CD8-positive, alpha-beta T cell (primary cell): ENCODE measurements at regions of chr11 and their contacts with region 1.

Region 1: GRCh38 chr11:65083834-65084597 is at the starts of genes CDCA5 and ZFPL1:
- DNase-seq: peak; percentile 94 to 98 (median 96)
- ATAC-seq: peak; percentile 88
- H3K4me3 ChIP-seq: peak within 1 kb of the TSS; percentile 71 to 87
- H3K4me3 Mint-ChIP-seq: peak within 1 kb of the TSS; percentile 93
- H3K27ac ChIP-seq: peak within 1 kb of the TSS; percentile 90 to 97
- H3K27ac Mint-ChIP-seq: peak within 1 kb of the TSS; percentile 99
- H3K4me1 ChIP-seq: peaks cover 17% of the 10 kb centered on the region
- H3K4me1 Mint-ChIP-seq: peaks cover 27% of the 10 kb centered on the region
- H3K27me3 ChIP-seq: no peaks in the 10 kb centered on the region
- H3K27me3 Mint-ChIP-seq: no peaks in the 10 kb centered on the region
- CTCF ChIP-seq: no peak
- total RNA-seq, gene CDCA5: 0.76 to 1.2 TPM
- total RNA-seq, gene ZFPL1: 52.3 to 52.6 TPM

Region 2: DNA sequence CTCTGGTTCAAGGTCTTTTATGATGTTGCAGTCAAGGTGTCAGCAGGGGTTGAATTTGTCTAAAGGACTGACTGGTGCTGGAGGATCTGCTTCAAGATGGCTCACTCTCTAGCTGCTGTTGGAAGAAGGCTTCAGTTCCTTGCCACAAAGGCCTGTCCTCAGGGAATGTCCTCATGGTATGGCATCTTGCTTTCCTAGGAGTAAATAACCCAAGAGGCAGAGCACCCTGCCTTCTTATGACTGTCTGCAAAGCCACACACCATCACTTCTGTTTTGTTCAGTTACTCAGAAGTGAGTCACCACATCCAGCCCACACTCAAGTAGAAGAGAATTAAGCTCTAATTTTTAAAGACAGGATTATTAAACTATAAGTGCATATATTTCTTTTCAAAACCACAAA is 1638.3 kb before region 1 on chr11:
- CTCF ChIA-PET with region 1: no interaction called
- POLR2A ChIA-PET with region 1: no interaction called
- intact Hi-C with region 1: no loop called
- DNase-seq: no peak
- ATAC-seq: no peak
- H3K4me3 ChIP-seq: no peak overlapping the region
- H3K4me3 Mint-ChIP-seq: no peak overlapping the region
- H3K27ac ChIP-seq: no peak overlapping the region
- H3K27ac Mint-ChIP-seq: no peak overlapping the region
- H3K4me1 ChIP-seq: no peaks in the 10 kb centered on the region
- H3K4me1 Mint-ChIP-seq: peaks cover 13% of the 10 kb centered on the region
- H3K27me3 ChIP-seq: no peaks in the 10 kb centered on the region
- H3K27me3 Mint-ChIP-seq: no peaks in the 10 kb centered on the region
- CTCF ChIP-seq: no peak

Region 3: GRCh38 chr11:65040847-65041621 is 43.0 kb before region 1 on chr11 and contains the start of gene SAC3D1:
- CTCF ChIA-PET with region 1: interaction called, 4 read pairs
- POLR2A ChIA-PET with region 1: no interaction called
- intact Hi-C with region 1: loop called (anchors 1 kb)
- DNase-seq: peak; percentile 67 to 94 (median 85)
- ATAC-seq: peak; percentile 90
- H3K4me3 ChIP-seq: peak within 1 kb of the TSS; percentile 63 to 76
- H3K4me3 Mint-ChIP-seq: peak within 1 kb of the TSS; percentile 93
- H3K27ac ChIP-seq: peak within 1 kb of the TSS; percentile 34 to 82
- H3K27ac Mint-ChIP-seq: peak within 1 kb of the TSS; percentile 91
- H3K4me1 ChIP-seq: peaks cover 17% of the 10 kb centered on the region
- H3K4me1 Mint-ChIP-seq: peaks cover 15% of the 10 kb centered on the region
- H3K27me3 ChIP-seq: no peaks in the 10 kb centered on the region
- H3K27me3 Mint-ChIP-seq: no peaks in the 10 kb centered on the region
- CTCF ChIP-seq: no peak
- total RNA-seq, gene SAC3D1: 0.57 to 0.94 TPM

Region 4: GRCh38 chr11:65095974-65096806 is 12.2 kb after region 1 on chr11 and contains the start of gene VPS51:
- CTCF ChIA-PET with region 1: interaction called, 5 read pairs
- POLR2A ChIA-PET with region 1: interaction called, 10 read pairs
- intact Hi-C with region 1: loop called (anchors 1 kb)
- DNase-seq: peak; percentile 70 to 95 (median 85)
- ATAC-seq: peak; percentile 84
- H3K4me3 ChIP-seq: peak within 1 kb of the TSS; percentile 80 to 81
- H3K4me3 Mint-ChIP-seq: peak within 1 kb of the TSS; percentile 95
- H3K27ac ChIP-seq: peak within 1 kb of the TSS; percentile 82 to 89
- H3K27ac Mint-ChIP-seq: peak within 1 kb of the TSS; percentile 99
- H3K4me1 ChIP-seq: peaks cover 12% of the 10 kb centered on the region
- H3K4me1 Mint-ChIP-seq: peaks cover 24% of the 10 kb centered on the region
- H3K27me3 ChIP-seq: no peaks in the 10 kb centered on the region
- H3K27me3 Mint-ChIP-seq: no peaks in the 10 kb centered on the region
- CTCF ChIP-seq: no peak
- total RNA-seq, gene VPS51: 221 to 263 TPM